WTC11 (cell line): ENCODE measurements at regions of chr22 and their contacts with region 1.

Region 1: GRCh38 chr22:46563381-46564083 is 26.1 kb upstream of the CELSR1 start:
- DNase-seq: peak; percentile 82
- ATAC-seq: peak; percentile 92
- H3K4me3 Mint-ChIP-seq: peak overlapping the region; percentile 18
- H3K27ac Mint-ChIP-seq: peak overlapping the region; percentile 79
- H3K4me1 Mint-ChIP-seq: peaks cover 6% of the 10 kb centered on the region; the same call in 1 of the 2 replicates
- H3K27me3 Mint-ChIP-seq: no peaks in the 10 kb centered on the region; the same call in 1 of the 2 replicates
- CTCF ChIP-seq: peak; percentile 61

Region 2: GRCh38 chr22:46542011-46542985 is 21.2 kb before region 1 on chr22:
- CTCF ChIA-PET with region 1: interaction called, 27 read pairs
- POLR2A ChIA-PET with region 1: interaction called, 4 read pairs
- DNase-seq: peak; percentile 90
- ATAC-seq: peak; percentile 96
- H3K4me3 Mint-ChIP-seq: no peak overlapping the region
- H3K27ac Mint-ChIP-seq: no peak overlapping the region
- H3K4me1 Mint-ChIP-seq: peaks cover 5% of the 10 kb centered on the region
- H3K27me3 Mint-ChIP-seq: peaks cover 38% of the 10 kb centered on the region
- CTCF ChIP-seq: peak; percentile 89

Region 3: DNA sequence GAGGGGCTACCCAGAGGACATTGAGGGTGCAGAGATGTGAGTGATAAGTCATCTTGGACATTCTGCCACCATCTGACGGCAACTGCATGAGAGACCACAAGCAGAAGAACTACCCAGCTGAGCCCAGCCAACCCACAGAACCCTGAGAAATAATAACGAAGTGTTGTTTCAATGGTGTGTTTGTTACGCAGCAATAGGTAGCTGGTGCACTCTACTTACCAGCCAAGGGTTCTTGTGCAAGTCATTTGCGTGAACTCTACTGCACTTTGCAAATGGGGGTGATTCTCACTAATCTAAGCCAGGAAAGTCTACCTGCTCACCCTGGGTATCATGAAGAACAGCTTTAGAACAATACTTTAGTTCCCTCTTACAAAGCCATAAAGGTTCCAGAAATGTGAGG is 10.3 kb before region 1 on chr22:
- CTCF ChIA-PET with region 1: interaction called, 27 read pairs
- POLR2A ChIA-PET with region 1: no interaction called
- DNase-seq: no peak
- ATAC-seq: no peak
- H3K4me3 Mint-ChIP-seq: no peak overlapping the region
- H3K27ac Mint-ChIP-seq: no peak overlapping the region
- H3K4me1 Mint-ChIP-seq: no peaks in the 10 kb centered on the region
- H3K27me3 Mint-ChIP-seq: peaks cover 4% of the 10 kb centered on the region
- CTCF ChIP-seq: no peak

Region 4: GRCh38 chr22:46596819-46597218 is 33.3 kb after region 1 on chr22:
- CTCF ChIA-PET with region 1: interaction called, 23 read pairs
- POLR2A ChIA-PET with region 1: no interaction called
- DNase-seq: peak; percentile 49
- ATAC-seq: peak; percentile 78
- H3K4me3 Mint-ChIP-seq: no peak overlapping the region
- H3K27ac Mint-ChIP-seq: no peak overlapping the region
- H3K4me1 Mint-ChIP-seq: peaks cover 9% of the 10 kb centered on the region
- H3K27me3 Mint-ChIP-seq: no peaks in the 10 kb centered on the region
- CTCF ChIP-seq: no peak

Region 5: DNA sequence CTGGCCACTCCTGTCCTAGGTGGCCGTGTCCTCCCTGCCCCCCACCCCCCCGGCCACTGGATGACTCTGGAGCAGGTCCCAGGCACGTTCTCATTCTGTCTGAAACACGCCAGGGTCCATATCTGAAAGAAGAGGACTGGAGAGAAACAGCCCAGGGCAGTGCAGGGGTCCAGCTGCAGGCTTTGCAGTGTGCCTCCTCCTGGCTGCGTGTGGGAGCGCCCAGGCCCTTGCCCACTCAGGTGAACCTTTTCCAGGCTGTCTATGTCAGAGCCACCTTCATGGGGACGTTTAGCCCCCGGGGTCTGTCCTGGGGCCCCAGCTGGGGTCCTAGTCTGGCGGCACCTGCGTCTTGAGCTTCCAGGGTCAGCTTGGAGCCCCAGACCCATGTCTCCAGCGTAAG is 72.2 kb after region 1 on chr22:
- CTCF ChIA-PET with region 1: interaction called, 28 read pairs
- POLR2A ChIA-PET with region 1: no interaction called
- DNase-seq: peak; percentile 38
- ATAC-seq: peak; percentile 68
- H3K4me3 Mint-ChIP-seq: no peak overlapping the region
- H3K27ac Mint-ChIP-seq: no peak overlapping the region
- H3K4me1 Mint-ChIP-seq: peaks cover 17% of the 10 kb centered on the region
- H3K27me3 Mint-ChIP-seq: no peaks in the 10 kb centered on the region
- CTCF ChIP-seq: no peak

Region 6: GRCh38 chr22:46673662-46674236 is 110.2 kb after region 1 on chr22:
- CTCF ChIA-PET with region 1: interaction called, 24 read pairs
- POLR2A ChIA-PET with region 1: no interaction called
- DNase-seq: no peak
- ATAC-seq: no peak
- H3K4me3 Mint-ChIP-seq: no peak overlapping the region
- H3K27ac Mint-ChIP-seq: peak overlapping the region; percentile 23; the same call in 1 of the 2 replicates
- H3K4me1 Mint-ChIP-seq: no peaks in the 10 kb centered on the region
- H3K27me3 Mint-ChIP-seq: no peaks in the 10 kb centered on the region
- CTCF ChIP-seq: no peak

Region 7: GRCh38 chr22:46762238-46763050 is 198.9 kb after region 1 on chr22 and contains the start of gene TBC1D22A:
- CTCF ChIA-PET with region 1: interaction called, 13 read pairs
- POLR2A ChIA-PET with region 1: no interaction called
- DNase-seq: peak; percentile 94
- ATAC-seq: peak; percentile 85
- H3K4me3 Mint-ChIP-seq: peak within 1 kb of the TSS; percentile 99
- H3K27ac Mint-ChIP-seq: peak within 1 kb of the TSS; percentile 99
- H3K4me1 Mint-ChIP-seq: peaks cover 20% of the 10 kb centered on the region
- H3K27me3 Mint-ChIP-seq: no peaks in the 10 kb centered on the region
- CTCF ChIP-seq: no peak
- total RNA-seq, gene TBC1D22A: 18.1 to 21.0 TPM (median 19.1 TPM) in 3 replicates